K562 (cell line): ENCODE measurements at regions of chr20 and their contacts with region 1.

Region 1: DNA sequence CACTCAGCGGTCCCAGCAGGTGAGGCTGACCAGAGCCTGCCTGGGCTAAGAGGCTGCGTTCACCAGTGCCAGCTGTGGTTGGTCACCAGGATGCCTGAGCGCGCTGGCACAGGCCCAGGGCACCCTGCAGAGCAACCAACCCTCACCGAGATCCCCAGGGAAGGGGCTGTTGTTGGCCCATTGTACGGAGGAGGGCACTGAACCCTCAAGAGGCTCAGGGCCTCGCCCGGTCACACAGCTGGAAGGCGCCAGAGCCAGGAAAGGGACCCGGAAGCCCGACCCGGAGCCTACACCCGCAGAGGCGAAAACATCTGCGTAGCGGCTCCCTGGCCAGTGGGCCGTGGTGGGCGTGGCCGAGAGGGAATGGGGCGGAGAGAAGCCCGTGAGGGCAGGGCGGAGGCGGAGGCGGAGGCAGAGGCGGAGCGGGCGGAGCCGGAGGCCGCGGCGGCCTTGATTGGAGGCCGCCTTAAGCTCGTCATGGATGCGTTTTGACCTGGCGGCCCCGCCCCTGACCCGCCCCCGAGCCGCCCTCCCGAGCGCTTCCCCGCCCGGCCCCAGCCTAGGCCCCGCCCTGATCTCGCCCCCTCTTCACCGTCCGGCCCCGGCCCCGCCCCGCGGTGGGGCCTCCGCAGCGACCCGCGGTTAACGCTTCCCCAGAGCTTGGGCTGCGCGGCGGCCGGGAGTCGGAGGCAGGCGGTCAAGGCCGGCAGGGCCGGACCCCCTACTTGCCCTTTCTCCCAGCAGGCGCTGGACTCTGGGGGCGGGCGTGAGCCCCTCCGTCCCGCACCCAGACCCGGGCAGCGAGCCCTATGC is 2.2 kb upstream of the MRGBP start:
- DNase-seq: peak; percentile 96 to 97 (median 96)
- ATAC-seq: peak; percentile 89
- H3K4me3 ChIP-seq: peak overlapping the region; percentile 61
- H3K27ac ChIP-seq: peak overlapping the region; percentile 88
- H3K4me1 ChIP-seq: peaks cover 10 to 67% of the 10 kb centered on the region in 2 experiments; a peak in 4 of 5 replicates
- H3K27me3 ChIP-seq: peaks cover 3 to 8% of the 10 kb centered on the region in 2 experiments; a peak in 3 of 5 replicates
- CTCF ChIP-seq: peak in 1 of 3 experiments; percentile 18; a peak in 1 of 6 replicates
- EP300 ChIP-seq: 0 out of 2 replicates have a peak, but pooled peaks have one; percentile 7
- POLR2A ChIP-seq: peak; percentile 93
- RAD21 ChIP-seq: no peak

Region 2: DNA sequence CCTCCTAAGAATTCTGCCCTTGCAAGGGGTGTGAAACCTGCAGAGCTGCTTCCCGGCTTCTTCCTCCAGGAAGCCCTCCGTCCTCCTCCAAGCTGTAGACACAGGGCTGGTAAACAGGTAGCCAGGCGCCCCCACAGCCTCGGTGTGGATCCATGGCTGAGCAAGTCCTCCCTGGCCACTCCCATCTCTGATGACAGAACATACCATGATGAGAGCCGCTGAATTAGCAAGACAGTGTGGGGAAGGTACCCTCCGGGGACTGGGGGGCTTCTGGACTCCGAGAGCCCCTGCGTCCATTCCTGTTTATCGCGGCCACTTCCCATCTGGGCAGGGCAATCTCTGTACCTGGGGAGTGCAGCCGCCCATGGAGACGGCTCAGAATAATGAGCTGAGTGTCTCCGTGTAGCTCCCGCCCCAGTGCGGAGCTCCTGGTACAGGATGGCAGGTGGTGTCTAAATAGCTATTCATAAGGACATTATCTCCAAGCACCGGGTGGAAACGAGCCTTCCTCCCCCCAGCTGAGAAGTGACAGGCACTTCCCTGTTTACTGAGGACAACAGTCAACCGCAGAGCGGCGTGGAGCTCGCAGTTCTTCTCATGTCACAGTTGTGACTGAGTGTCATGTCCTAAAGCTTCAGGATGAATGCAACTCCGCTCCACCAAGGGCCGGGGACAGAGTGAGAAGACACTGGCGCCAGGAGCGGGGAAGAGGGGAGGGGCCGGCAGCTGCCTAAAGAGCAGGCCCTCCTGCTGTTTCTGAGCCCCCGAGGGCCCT is 108.2 kb before region 1 on chr20:
- CTCF ChIA-PET with region 1: no interaction called
- POLR2A ChIA-PET with region 1: interaction called, 3 read pairs
- in situ Hi-C with region 1: no loop called
- intact Hi-C with region 1: loop called (anchors 5 kb)
- DNase-seq: peak; percentile 54 to 86 (median 68)
- ATAC-seq: peak; percentile 90
- H3K4me3 ChIP-seq: no peak overlapping the region
- H3K27ac ChIP-seq: no peak overlapping the region
- H3K4me1 ChIP-seq: peaks cover 15 to 61% of the 10 kb centered on the region in 2 experiments
- H3K27me3 ChIP-seq: peaks cover 26 to 55% of the 10 kb centered on the region in 2 experiments
- CTCF ChIP-seq: no peak
- EP300 ChIP-seq: peak; percentile 69
- POLR2A ChIP-seq: no peak
- RAD21 ChIP-seq: no peak